ENCODE measurements at regions of chr6 and their contacts with region 1.

Region 1: GRCh38 chr6:168355716-168356449 is 36.3 kb upstream of the DACT2 start:
- DNase-seq: peak in 4 of 5 donors; percentile 55 to 69 (median 60)
- ATAC-seq: peak; percentile 78 to 96 (median 90)
- H3K4me3 ChIP-seq: peak overlapping the region in 3 of 12 donors; percentile 15 to 18 (median 15)
- H3K27ac ChIP-seq: no peak overlapping the region
- H3K4me1 ChIP-seq: peaks cover 0 to 8% (median 0%) of the 10 kb centered on the region in 12 donors
- H3K27me3 ChIP-seq: peaks cover 0 to 19% (median 0%) of the 10 kb centered on the region in 9 donors
- CTCF ChIP-seq: peak; percentile 50 to 75 (median 66)
- POLR2A ChIP-seq: no peak

Region 2: DNA sequence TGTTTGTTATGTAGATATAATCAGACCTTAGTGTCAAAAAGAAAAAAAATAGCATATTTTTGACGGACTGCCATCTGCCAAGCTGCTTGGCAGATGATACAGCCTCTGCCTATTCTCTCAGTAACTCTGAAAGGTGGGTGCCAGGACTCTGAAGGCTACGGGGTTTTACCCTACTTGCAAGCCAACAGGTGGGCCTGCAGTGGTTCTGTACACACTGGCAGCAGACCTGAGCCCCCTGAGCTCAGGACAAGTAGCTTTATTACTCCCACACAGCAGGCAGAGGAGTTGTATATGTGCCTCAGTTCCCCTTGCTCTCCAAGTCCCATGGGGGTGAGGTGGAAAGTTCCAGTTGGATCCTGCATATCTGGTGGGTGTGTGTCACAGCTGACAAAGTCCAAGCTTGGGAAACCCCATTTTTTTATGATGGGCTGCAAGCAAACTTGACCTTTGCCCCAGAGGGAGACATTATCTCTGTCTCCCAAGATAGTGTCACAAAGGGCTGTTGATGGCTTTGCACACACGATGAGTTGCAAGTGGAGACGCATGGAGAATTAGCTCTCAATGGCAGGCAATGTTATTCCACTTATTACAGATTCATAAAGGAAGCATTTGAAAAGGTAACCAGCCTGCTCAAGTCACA is 549.7 kb before region 1 on chr6:
- intact Hi-C with region 1: no loop called
- DNase-seq: no peak
- ATAC-seq: no peak
- H3K4me3 ChIP-seq: peak overlapping the region in 1 of 12 donors; percentile 11
- H3K27ac ChIP-seq: no peak overlapping the region
- H3K4me1 ChIP-seq: no peaks in the 10 kb centered on the region
- H3K27me3 ChIP-seq: no peaks in the 10 kb centered on the region
- CTCF ChIP-seq: no peak
- POLR2A ChIP-seq: no peak

Region 3: DNA sequence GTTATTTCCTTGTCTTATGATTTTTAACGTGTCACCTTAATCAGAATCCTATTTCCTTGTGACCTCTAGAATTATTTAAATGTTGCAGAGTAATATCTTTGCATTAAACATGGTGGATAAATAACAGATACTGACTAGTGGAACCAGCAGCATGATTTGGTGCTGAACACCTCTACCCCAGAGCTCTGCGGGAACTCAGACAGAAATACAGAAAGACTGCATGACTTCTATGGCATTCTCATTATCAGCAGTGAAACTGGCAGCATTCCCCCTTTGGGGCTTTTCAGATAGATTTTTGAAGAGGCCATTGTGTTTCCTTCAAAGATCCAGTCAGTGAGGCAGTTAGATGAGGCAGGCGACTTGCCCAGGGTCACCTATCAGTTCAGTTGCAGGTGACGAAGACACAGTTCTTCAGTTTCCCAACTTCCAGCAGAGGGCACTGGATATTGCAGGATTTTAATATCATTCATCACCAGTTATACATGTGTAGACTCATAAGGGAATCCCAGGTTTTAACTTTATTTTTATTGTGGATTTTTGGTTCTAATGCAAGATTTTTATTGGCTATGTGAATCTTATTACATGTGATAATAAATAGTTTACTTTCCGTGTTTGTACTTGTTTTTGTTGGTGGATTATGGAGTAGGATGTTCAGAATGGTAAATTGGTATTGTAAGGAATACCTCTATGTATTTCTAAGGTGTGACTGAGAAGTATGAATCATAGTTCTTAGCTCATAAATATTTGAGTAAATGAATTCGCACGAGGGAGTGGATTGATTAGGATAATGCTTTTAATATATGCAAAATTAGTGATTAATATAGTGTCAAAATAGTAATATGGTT is 447.8 kb before region 1 on chr6:
- intact Hi-C with region 1: loop called in 3 of 10 experiments (anchors 10 kb)
- DNase-seq: no peak
- ATAC-seq: peak in 2 of 4 donors; percentile 61 to 64
- H3K4me3 ChIP-seq: peak overlapping the region in 1 of 12 donors; percentile 12
- H3K27ac ChIP-seq: peak overlapping the region in 1 of 12 donors; percentile 62
- H3K4me1 ChIP-seq: peaks cover 0 to 22% (median 9%) of the 10 kb centered on the region in 12 donors
- H3K27me3 ChIP-seq: no peaks in the 10 kb centered on the region
- CTCF ChIP-seq: peak; percentile 33 to 77 (median 62)
- POLR2A ChIP-seq: no peak

Region 4: GRCh38 chr6:167919349-167919748 is 436.5 kb before region 1 on chr6:
- intact Hi-C with region 1: loop called in 1 of 10 experiments (anchors 10 kb)
- DNase-seq: no peak
- ATAC-seq: no peak
- H3K4me3 ChIP-seq: no peak overlapping the region
- H3K27ac ChIP-seq: no peak overlapping the region
- H3K4me1 ChIP-seq: no peaks in the 10 kb centered on the region
- H3K27me3 ChIP-seq: no peaks in the 10 kb centered on the region
- CTCF ChIP-seq: no peak
- POLR2A ChIP-seq: no peak

Region 5: GRCh38 chr6:168060521-168060931 is 295.4 kb before region 1 on chr6:
- intact Hi-C with region 1: loop called in 2 of 10 experiments (anchors 2 to 10 kb)
- DNase-seq: peak; percentile 74 to 82 (median 80)
- ATAC-seq: peak; percentile 59 to 88 (median 77)
- H3K4me3 ChIP-seq: no peak overlapping the region
- H3K27ac ChIP-seq: no peak overlapping the region
- H3K4me1 ChIP-seq: peaks cover 3 to 26% (median 9%) of the 10 kb centered on the region in 12 donors
- H3K27me3 ChIP-seq: no peaks in the 10 kb centered on the region
- CTCF ChIP-seq: peak; percentile 42 to 79 (median 68)
- POLR2A ChIP-seq: no peak

Region 6: DNA sequence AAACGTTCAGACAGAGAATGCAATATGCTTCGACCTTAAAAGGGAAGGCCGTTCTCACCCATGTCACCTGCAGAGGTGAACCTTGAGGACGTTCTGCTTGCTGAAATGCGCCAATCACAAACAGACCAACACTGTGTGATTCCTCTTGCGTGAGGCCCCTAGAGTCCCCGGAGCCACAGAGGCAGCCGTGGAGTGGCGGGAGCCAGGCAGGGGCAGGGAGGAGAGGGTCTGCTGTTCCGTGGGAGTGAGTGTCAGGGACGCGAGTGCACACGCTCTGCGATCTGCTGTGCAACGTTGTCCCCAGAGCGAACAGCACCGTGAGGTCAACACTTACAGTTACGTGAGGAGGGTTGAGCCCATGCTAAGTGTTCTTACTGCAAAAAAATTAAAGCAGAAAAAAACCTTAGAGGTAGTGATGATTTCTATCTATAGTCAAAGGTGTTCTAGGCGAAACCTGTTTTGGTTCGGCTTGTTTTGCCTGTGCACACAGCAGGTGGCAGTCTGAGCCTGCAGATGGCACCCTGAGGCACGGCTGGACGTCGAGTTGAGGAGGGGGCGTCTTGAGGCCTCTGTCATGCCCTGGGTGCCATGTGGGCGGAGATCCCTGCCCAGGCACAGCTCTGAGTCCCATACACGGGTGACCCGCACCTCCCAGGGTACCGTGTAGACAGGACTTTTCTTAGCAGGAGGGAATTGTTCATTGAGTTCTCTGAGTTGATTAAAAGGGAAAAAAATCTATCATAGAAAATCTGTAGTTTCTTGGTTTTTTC is 205.1 kb before region 1 on chr6:
- intact Hi-C with region 1: loop called in 8 of 10 experiments (anchors 2 to 10 kb)
- DNase-seq: peak in 1 of 5 donors; percentile 15
- ATAC-seq: peak in 2 of 4 donors; percentile 28 to 37
- H3K4me3 ChIP-seq: no peak overlapping the region
- H3K27ac ChIP-seq: no peak overlapping the region
- H3K4me1 ChIP-seq: peaks cover 0 to 4% (median 0%) of the 10 kb centered on the region in 12 donors
- H3K27me3 ChIP-seq: peaks cover 0 to 39% (median 6%) of the 10 kb centered on the region in 9 donors
- CTCF ChIP-seq: peak in 9 of 12 donors; percentile 6 to 57 (median 47)
- POLR2A ChIP-seq: no peak

Region 7: DNA sequence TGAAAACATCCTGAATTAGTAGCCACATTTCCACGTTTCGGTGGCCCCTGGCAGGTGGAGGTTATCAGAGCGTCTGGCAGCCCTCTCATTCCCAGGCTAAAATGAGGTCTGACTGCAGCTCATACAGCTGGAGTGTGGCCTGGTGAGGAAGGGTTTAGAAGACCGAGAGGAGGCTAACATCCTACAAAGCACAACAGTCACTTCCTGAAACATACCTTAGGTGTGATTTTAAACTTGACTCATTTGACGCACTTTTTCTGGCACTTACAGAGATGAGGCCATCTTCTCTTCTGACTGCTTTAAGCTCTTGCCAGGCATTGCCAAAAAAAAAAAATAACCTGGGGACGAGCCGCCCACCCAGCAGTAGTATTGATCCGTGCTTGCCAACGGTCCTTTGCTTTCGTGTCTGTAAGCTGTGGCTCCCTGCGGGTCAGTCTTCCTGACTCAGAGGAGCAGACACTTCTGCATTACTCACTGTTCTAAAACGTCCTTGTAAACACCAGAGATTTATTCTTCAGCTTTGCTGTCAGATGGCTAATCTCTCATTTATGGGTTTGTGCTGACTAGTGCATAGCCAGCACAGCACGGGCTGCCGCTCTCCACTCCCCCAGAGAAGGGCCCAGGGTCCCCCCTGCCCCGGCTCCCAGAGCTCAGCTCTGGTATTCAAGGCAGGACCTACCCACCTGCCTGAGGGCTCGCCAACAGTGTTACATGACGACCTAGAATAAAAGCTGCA is 198.4 kb before region 1 on chr6:
- intact Hi-C with region 1: loop called in 6 of 10 experiments (anchors 5 to 10 kb)
- DNase-seq: peak in 1 of 5 donors; percentile 12
- ATAC-seq: peak in 1 of 4 donors; percentile 71
- H3K4me3 ChIP-seq: peak overlapping the region in 1 of 12 donors; percentile 32
- H3K27ac ChIP-seq: peak overlapping the region in 2 of 12 donors; percentile 29 to 69
- H3K4me1 ChIP-seq: peaks cover 0 to 7% (median 0%) of the 10 kb centered on the region in 12 donors
- H3K27me3 ChIP-seq: peaks cover 0 to 38% (median 4%) of the 10 kb centered on the region in 9 donors
- CTCF ChIP-seq: no peak
- POLR2A ChIP-seq: no peak

Region 8: DNA sequence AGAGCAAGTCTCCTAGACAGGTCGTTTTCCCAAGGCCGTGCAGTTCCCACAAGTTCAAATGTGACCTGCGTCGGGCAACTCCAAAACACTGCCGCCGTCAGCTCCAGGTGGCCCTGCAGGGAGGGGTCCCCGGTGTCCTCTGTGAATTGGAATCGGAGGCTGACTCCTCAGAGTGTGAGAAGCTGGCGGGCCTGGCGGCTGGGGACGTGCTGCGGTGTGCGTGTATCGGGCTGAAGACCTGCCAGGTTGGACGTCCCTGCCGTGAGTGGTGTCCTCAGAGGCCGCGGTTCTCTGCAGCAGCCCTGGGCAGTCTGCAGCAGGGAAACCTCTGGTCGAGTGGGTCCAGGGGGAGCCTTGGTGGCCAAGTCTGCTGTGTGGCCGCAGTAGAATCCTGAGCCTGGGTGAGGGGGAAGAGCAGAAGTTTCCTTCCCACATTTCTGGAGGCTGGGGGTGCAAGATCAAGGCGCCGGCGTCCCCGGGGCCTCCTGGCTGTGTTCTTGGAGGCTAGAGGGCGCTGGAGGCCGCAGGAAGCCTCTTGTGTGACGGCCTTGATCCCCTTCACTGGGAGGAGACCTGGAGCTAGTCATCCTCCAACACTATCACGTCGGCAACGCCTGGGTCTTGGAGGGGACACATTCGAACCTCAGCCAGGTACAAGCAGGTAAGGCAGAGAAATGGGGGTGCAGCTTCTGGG is 161.7 kb before region 1 on chr6:
- intact Hi-C with region 1: no loop called
- DNase-seq: peak in 2 of 5 donors; percentile 11 to 58
- ATAC-seq: no peak
- H3K4me3 ChIP-seq: no peak overlapping the region
- H3K27ac ChIP-seq: no peak overlapping the region
- H3K4me1 ChIP-seq: no peaks in the 10 kb centered on the region
- H3K27me3 ChIP-seq: peaks cover 0 to 21% (median 0%) of the 10 kb centered on the region in 9 donors
- CTCF ChIP-seq: no peak
- POLR2A ChIP-seq: no peak